ENCODE measurements at regions of chr13 and their contacts with region 1.

Region 1: GRCh38 chr13:21137696-21138095 is 38.7 kb downstream of the SKA3 start:
- DNase-seq: no peak
- ATAC-seq: no peak
- H3K4me3 ChIP-seq: no peak overlapping the region
- H3K27ac ChIP-seq: no peak overlapping the region
- H3K4me1 ChIP-seq: peaks cover 11 to 23% of the 10 kb centered on the region in 2 donors
- H3K27me3 ChIP-seq: no peaks in the 10 kb centered on the region
- CTCF ChIP-seq: no peak

Region 2: DNA sequence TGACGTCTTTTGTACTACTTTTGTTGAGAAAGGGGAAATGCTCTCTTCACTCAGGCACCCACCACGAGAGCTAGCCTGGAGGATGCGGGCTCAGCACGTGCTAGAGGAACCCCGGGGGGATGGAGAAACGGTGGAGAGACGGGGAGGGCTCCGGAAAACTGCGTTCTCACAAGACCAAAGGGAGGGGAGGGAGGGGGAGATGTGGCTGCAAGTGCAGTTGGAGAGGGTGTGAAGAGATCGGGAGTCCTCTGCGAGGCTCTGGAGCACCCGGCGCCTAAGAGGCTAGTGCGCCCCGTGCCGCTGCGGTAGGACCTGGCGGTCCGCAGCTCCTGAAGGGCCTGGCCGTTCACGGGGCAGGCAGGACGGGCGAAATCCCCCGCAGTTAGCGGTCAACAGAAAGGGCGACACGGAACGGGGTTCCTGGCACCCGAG is 191.7 kb before region 1 on chr13:
- intact Hi-C with region 1: loop called in 1 of 2 experiments (anchors 10 kb)
- DNase-seq: peak in 3 of 4 donors; percentile 32 to 80 (median 51)
- ATAC-seq: no peak
- H3K4me3 ChIP-seq: peak overlapping the region in 1 of 2 donors; percentile 6
- H3K27ac ChIP-seq: no peak overlapping the region
- H3K4me1 ChIP-seq: peaks cover 0 to 21% of the 10 kb centered on the region in 2 donors
- H3K27me3 ChIP-seq: peaks cover 0 to 17% of the 10 kb centered on the region in 2 donors
- CTCF ChIP-seq: no peak